ENCODE measurements at regions of chr15 and their contacts with region 1.

Region 1: DNA sequence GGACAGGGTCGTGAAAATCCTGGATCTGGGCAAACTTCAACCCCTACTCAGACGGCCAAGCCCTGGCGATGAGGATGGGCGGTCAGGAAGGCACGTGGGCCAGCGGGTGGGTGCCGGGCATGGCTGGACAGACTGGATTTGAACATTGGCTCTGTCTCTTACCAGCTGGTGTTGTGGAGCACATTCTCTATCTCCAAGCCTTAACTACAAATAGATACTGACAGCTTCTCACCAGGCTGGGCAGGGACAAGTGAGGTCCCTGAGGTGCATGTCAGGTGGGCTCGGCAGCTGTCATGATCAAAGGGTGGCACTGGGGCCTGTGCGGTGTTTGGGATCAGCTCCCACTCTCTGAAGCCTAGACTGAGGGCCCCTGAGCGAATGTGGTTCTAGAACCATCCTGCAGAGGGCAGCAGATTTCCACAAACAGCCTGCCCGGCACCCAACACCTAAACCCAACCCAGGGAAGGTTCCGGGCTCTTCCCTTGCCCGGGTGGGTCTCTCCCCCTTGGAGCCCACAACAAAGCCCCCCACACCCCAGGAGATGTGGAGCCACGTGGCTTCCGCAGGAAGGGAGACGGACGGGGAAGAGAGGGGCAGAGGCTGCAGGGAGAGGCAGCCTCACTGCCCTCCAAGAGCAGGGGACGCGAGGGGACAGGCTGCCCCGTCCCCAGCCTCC is 58.4 kb downstream of the RGMA start:
- DNase-seq: peak; percentile 76 to 81
- H3K4me3 ChIP-seq: no peak overlapping the region
- H3K27ac ChIP-seq: peak overlapping the region; percentile 68 to 82
- H3K4me1 ChIP-seq: peaks cover 0 to 4% of the 10 kb centered on the region in 2 donors
- H3K27me3 ChIP-seq: no peaks in the 10 kb centered on the region
- CTCF ChIP-seq: peak; percentile 78 to 94 (median 89)
- POLR2A ChIP-seq: no peak

Region 2: GRCh38 chr15:92979011-92979701 is 51.4 kb before region 1 on chr15:
- intact Hi-C with region 1: no loop called
- DNase-seq: peak in 1 of 2 donors; percentile 58
- H3K4me3 ChIP-seq: no peak overlapping the region
- H3K27ac ChIP-seq: peak overlapping the region; percentile 70 to 79
- H3K4me1 ChIP-seq: no peaks in the 10 kb centered on the region
- H3K27me3 ChIP-seq: no peaks in the 10 kb centered on the region
- CTCF ChIP-seq: no peak
- POLR2A ChIP-seq: no peak

Region 3: GRCh38 chr15:93362821-93363220 is 332.3 kb after region 1 on chr15:
- intact Hi-C with region 1: no loop called
- DNase-seq: peak in 1 of 2 donors; percentile 20
- H3K4me3 ChIP-seq: no peak overlapping the region
- H3K27ac ChIP-seq: no peak overlapping the region
- H3K4me1 ChIP-seq: no peaks in the 10 kb centered on the region
- H3K27me3 ChIP-seq: no peaks in the 10 kb centered on the region
- CTCF ChIP-seq: no peak
- POLR2A ChIP-seq: no peak

Region 4: DNA sequence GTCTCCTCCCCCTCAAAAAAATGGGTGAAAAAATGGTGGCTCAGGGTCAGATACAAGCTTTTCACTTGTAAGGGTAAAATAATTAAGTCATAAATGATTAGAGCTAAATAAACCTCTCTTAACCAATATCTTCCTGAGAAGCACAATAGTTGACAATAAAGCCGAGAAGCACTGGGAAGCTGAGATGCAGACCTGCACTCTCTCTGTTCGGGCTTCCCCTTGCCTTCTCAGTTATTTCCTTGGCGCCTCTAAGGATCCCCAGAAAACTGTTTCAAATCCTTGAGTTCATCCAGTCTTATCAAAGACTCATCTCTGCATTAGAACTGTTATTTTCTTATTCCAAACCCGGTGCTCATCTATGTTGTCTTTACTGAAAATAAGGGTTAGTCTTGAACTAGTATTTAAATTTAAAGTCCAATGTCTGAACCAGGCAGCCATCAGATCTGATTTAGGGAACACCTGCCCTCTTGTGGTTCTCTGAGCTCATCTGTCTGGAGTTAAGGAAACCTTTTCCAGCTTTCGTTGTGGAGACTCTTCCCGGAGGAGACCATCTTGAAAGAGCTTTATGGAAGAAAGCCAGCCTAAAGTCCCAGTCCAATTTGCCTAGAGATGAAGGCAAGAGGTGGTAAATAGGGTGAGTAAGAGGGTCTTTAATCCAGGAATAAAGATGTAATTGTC is 944.4 kb after region 1 on chr15:
- intact Hi-C with region 1: loop called (anchors 5 kb)
- DNase-seq: peak in 1 of 2 donors; percentile 20
- H3K4me3 ChIP-seq: no peak overlapping the region
- H3K27ac ChIP-seq: no peak overlapping the region
- H3K4me1 ChIP-seq: peaks cover 0 to 4% of the 10 kb centered on the region in 2 donors
- H3K27me3 ChIP-seq: no peaks in the 10 kb centered on the region
- CTCF ChIP-seq: peak; percentile 31 to 41 (median 32)
- POLR2A ChIP-seq: no peak